ENCODE measurements at regions of chr1 and their contacts with region 1.

Region 1: DNA sequence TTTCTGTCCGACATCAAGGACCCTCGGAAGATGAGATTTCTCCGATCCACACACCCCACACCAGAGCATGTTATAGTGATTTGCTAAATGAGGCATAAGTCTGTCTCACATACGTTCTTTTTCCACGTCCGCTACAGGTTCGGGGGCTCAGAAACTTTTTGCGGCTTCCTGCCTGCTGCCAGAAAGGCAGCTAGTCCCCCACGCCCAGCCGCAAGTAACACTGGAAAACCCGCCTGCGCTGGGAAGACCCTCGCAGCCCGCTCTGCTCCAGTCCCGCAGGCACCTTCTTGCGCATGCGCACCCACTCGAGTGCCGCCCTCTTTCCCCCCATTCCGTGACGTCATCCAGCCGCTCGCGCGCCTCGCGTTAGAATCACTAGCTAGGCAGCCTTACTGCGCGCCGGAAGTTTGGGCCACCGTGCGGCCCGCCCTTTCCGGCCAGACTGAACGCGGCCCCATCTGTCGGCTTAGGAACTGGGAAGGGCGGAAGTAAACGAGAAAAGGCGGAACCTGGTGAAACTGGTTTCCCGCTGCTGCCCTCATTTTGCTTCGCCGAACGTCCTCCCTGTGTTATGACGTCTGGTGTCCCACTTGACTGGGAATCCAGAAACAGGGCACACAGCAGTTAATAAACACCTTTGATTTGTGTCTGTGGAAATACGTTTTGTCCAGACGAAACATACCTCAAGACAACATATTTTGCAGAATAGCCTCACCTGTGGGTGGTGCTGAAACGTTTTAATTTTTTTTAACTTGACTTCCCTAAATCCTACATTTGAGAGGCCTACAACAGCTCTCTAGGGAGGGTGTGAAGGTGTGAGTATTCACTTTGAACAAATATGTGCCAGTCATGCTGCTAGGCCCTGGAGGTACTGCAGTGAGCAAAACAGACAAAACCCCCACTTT is at the start of gene C1orf74:
- DNase-seq: peak; percentile 93
- ATAC-seq: peak; percentile 99
- H3K4me3 ChIP-seq: peak within 1 kb of the TSS; percentile 89 to 93
- H3K27ac ChIP-seq: peak within 1 kb of the TSS; percentile 68
- H3K4me1 ChIP-seq: peaks cover 6 to 15% of the 10 kb centered on the region in 2 experiments
- H3K27me3 ChIP-seq: no peaks in the 10 kb centered on the region
- CTCF ChIP-seq: no peak
- POLR2A ChIP-seq: peak; percentile 82
- RAD21 ChIP-seq: no peak
- total RNA-seq, gene C1orf74: 5.6 TPM

Region 2: DNA sequence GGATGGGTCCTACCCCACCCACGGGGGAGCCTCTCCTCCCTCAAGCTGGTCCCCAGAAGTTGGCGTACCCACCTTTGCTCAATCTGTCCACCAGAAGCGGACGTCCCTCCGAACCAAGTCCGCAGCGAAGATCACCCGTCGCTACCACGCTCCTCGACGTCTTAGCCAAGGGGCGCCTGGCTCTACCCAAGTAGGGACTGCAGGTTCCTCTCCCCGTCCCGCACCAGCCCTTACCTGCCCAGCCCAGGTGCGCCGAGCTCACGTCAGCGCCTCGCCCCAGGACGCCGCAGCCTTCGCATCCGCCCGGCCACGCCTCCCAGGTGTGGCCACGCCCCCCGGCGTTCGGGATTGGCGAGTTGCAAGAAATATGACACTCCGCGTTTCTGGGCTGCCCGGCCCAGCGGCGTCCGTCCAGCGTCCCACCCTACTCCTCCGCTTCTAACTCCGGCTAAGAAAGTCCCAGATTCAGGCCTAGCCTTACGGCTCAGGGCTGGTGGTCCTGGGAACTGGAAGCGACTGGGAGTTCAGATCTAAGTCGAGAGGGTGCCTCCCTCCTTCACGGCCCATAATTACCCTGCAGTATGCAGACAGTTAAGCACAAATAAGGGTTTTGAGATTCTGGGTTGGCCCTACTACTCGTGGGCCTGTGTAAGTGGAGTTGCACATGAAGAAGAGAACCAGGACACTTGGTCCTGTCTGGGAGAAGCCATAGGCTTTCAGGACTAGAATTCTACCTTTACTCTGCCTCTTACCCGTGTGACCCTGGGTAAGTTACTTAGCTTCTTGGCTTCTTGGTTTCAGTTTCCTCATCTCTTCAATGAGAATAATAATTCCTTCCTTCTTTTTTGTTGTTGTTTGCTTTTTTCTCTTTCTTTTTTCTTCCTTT is 21.6 kb after region 1 on chr1 and contains the start of gene IRF6:
- CTCF ChIA-PET with region 1: no interaction called
- POLR2A ChIA-PET with region 1: interaction called, 5 read pairs
- RAD21 ChIA-PET with region 1: no interaction called
- intact Hi-C with region 1: loop called (anchors 1 kb)
- DNase-seq: peak; percentile 88
- ATAC-seq: peak; percentile 92
- H3K4me3 ChIP-seq: peak within 1 kb of the TSS; percentile 80 to 91
- H3K27ac ChIP-seq: peak within 1 kb of the TSS; percentile 64
- H3K4me1 ChIP-seq: peaks cover 11 to 38% of the 10 kb centered on the region in 2 experiments
- H3K27me3 ChIP-seq: no peaks in the 10 kb centered on the region
- CTCF ChIP-seq: no peak
- POLR2A ChIP-seq: peak; percentile 75
- RAD21 ChIP-seq: no peak
- total RNA-seq, gene IRF6: 35.2 TPM